Dendritic cell treated with granulocyte-macrophage colony-stimulating factor and Interleukin-4, amounts not matched to agents 40 ng/mL and 50 ng/mL, for 4 days (primary cell): ENCODE measurements at regions of chr7 and their contacts with region 1.

Region 1: GRCh38 chr7:140165422-140165821 is 11.4 kb downstream of the KDM7A start:
- H3K4me3 Mint-ChIP-seq: no peak overlapping the region
- H3K27ac Mint-ChIP-seq: no peak overlapping the region
- H3K4me1 Mint-ChIP-seq: peaks cover 60% of the 10 kb centered on the region
- H3K27me3 Mint-ChIP-seq: no peaks in the 10 kb centered on the region

Region 2: GRCh38 chr7:140134039-140134438 is 31.4 kb before region 1 on chr7:
- intact Hi-C with region 1: loop called (anchors 5 kb)
- H3K4me3 Mint-ChIP-seq: no peak overlapping the region
- H3K27ac Mint-ChIP-seq: no peak overlapping the region
- H3K4me1 Mint-ChIP-seq: peaks cover 5% of the 10 kb centered on the region
- H3K27me3 Mint-ChIP-seq: no peaks in the 10 kb centered on the region